Pancreas (tissue), 10 donors: ENCODE measurements at regions of chr10 and their contacts with region 1.

Region 1: DNA sequence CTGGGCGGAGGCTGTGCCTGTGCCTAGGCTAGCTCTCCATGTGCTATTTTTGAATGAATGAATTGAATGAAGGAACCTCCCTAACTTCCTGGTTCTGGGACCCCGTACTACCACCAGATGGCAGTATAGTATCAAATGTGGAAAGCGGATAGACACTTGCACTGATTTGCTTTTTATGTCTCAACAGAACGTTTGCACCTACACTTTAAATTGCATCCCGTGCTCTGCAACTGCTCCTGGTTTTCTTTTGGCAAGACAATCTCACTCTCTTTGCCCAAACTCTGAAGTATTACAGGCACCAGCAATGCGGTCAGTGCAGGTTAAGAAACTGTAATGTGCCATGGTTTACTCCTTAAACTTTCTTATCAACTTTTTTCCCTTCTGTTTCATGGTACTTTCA is 6.5 kb downstream of the FZD8 start:
- DNase-seq: peak in 3 of 6 donors; percentile 20 to 59 (median 28)
- ATAC-seq: peak; percentile 72 to 89 (median 86)
- H3K4me3 ChIP-seq: no peak overlapping the region
- H3K27ac ChIP-seq: no peak overlapping the region
- H3K4me1 ChIP-seq: no peaks in the 10 kb centered on the region
- H3K27me3 ChIP-seq: no peaks in the 10 kb centered on the region
- CTCF ChIP-seq: peak; percentile 58 to 85 (median 82)

Region 2: DNA sequence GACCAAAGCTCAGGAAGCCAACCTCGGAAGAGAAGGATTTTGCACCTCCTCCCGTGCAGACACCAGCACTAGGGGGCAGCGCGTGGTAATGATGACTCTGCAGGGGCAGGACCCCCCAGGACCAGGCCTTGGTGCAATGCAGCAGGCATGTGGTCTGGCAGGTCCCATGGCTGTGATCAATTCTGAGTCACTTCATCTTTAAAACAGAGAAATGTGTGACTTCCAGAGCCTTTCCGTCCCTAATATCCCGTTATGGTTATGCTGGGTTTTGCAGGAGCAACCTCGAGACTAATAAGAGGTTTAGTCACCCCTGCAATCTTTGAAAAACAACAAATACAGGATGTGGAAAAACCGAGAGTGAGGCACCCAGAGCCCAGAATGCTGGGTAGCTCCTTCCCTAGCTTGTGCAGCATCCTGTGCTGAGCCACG is 60.6 kb before region 1 on chr10:
- intact Hi-C with region 1: no loop called
- DNase-seq: no peak
- ATAC-seq: no peak
- H3K4me3 ChIP-seq: no peak overlapping the region
- H3K27ac ChIP-seq: no peak overlapping the region
- H3K4me1 ChIP-seq: no peaks in the 10 kb centered on the region
- H3K27me3 ChIP-seq: no peaks in the 10 kb centered on the region
- CTCF ChIP-seq: no peak

Region 3: DNA sequence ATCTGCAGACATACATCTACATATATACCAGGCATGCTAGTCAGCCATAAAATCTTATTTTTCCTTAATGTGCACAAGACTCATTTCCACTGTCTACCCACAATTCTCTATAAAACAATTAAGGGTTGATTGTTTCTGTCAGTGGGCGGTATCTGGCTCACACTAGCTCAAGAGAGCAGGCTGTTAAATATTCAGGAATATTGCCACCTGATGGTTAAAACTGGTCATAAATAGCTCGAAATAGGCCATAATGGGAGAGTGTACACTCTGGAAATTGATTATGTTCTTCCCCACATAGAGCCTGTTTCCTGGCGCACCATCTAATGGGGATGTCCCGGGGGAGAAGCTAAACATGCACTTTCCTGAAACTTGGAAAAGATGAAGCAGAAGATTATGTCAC is 869.2 kb after region 1 on chr10:
- intact Hi-C with region 1: loop called in 1 of 3 experiments (anchors 10 kb)
- DNase-seq: no peak
- ATAC-seq: no peak
- H3K4me3 ChIP-seq: no peak overlapping the region
- H3K27ac ChIP-seq: no peak overlapping the region
- H3K4me1 ChIP-seq: no peaks in the 10 kb centered on the region
- H3K27me3 ChIP-seq: no peaks in the 10 kb centered on the region
- CTCF ChIP-seq: no peak

Region 4: DNA sequence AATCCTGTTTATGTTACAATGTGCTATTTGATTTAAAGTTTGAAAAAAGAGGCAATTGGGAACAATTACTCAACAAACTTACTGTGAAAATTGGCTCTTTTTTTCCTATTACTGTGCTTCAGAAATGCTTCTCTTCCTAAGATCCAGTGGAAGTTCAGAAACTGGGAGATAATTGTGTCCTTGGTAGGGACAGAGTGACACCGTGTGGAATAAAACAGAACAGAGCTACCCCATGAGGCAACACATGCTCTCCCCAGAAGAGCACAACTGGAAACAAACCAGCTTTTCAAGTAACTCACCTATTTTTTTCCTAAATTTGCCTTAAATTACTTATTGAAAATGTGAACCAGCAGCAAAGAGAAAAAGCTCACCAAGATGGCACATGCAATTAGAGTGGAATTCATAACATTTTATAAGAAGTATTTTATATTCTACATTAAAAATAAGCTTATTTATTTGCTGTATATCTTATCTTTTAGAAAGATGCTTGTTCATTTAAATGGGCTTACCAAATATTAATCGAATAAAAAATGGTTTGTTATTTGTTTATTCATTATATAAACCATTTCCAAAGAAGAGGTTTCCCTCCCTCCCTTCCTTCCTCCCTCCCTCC is 1143.8 kb after region 1 on chr10:
- intact Hi-C with region 1: loop called in 2 of 3 experiments (anchors 5 to 10 kb)
- DNase-seq: peak in 1 of 6 donors; percentile 43
- ATAC-seq: peak; percentile 79 to 96 (median 88)
- H3K4me3 ChIP-seq: no peak overlapping the region
- H3K27ac ChIP-seq: no peak overlapping the region
- H3K4me1 ChIP-seq: no peaks in the 10 kb centered on the region
- H3K27me3 ChIP-seq: no peaks in the 10 kb centered on the region
- CTCF ChIP-seq: peak; percentile 17 to 51 (median 42)

Region 5: DNA sequence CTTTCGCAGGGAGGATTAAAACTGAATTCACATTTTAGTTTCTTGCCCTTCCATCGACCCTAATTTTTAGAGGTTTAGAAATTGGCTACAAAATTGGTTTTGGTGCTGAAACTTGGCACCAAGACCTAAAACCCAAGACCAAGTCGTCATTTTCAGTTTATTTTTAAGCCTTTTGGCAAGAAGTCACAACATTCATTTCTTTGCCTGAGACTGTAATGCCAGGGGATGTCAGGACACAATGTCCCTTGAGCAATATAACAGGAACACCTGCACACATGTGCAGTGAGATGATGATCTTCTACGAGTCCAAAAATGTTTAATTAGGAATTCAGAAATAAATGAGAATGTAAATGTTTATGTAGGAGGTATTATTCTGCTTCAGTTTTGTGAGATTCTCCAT is 1154.4 kb after region 1 on chr10:
- intact Hi-C with region 1: loop called in 1 of 3 experiments (anchors 10 kb)
- DNase-seq: no peak
- ATAC-seq: no peak
- H3K4me3 ChIP-seq: no peak overlapping the region
- H3K27ac ChIP-seq: no peak overlapping the region
- H3K4me1 ChIP-seq: peaks cover 0 to 3% (median 0%) of the 10 kb centered on the region in 3 donors
- H3K27me3 ChIP-seq: no peaks in the 10 kb centered on the region
- CTCF ChIP-seq: no peak

Region 6: GRCh38 chr10:36888929-36889573 is 1253.5 kb after region 1 on chr10:
- intact Hi-C with region 1: loop called in 1 of 3 experiments (anchors 10 kb)
- DNase-seq: no peak
- ATAC-seq: no peak
- H3K4me3 ChIP-seq: no peak overlapping the region
- H3K27ac ChIP-seq: no peak overlapping the region
- H3K4me1 ChIP-seq: no peaks in the 10 kb centered on the region
- H3K27me3 ChIP-seq: no peaks in the 10 kb centered on the region
- CTCF ChIP-seq: no peak